ENCODE measurements at regions of chr9 and their contacts with region 1.

Region 1: GRCh38 chr9:97632985-97633858 is at the starts of genes NCBP1 and TSTD2:
- DNase-seq: peak; percentile 96 to 98 (median 96)
- H3K4me3 ChIP-seq: peak within 1 kb of the TSS; percentile 74 to 96 (median 93)
- H3K4me3 Mint-ChIP-seq: peak within 1 kb of the TSS; percentile 94 to 98
- H3K27ac ChIP-seq: peak within 1 kb of the TSS; percentile 98
- H3K27ac Mint-ChIP-seq: peak within 1 kb of the TSS; percentile 97 to 100 (median 100)
- H3K4me1 ChIP-seq: peaks cover 24 to 36% of the 10 kb centered on the region in 2 donors
- H3K4me1 Mint-ChIP-seq: peaks cover 48% of the 10 kb centered on the region
- H3K27me3 ChIP-seq: no peaks in the 10 kb centered on the region
- H3K27me3 Mint-ChIP-seq: no peaks in the 10 kb centered on the region
- CTCF ChIP-seq: no peak
- polyA plus RNA-seq, gene NCBP1: 8.9 to 15.8 (median 11.1) TPM
- polyA plus RNA-seq, gene TSTD2: 1.2 to 11.4 (median 2.4) TPM

Region 2: DNA sequence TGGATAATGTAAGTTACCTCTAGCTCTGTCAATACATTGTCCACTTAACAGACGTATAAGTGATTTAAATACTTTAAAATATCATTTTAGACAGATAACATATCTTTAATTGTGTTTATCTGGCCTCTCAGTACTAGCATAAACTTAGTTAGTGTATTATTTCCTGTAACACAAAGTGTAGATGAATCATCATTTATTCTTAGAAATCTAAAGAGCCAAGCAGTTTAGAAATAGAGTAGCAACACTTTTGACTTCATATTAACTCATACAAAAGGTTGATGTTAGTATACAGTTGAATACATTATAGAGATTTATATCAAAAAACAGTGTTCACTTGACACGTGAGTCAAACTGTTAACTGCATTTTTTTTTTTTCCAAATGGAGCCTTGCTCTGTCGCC is 18.4 kb after region 1 on chr9:
- intact Hi-C with region 1: no loop called
- DNase-seq: no peak
- H3K4me3 ChIP-seq: no peak overlapping the region
- H3K4me3 Mint-ChIP-seq: no peak overlapping the region
- H3K27ac ChIP-seq: no peak overlapping the region
- H3K27ac Mint-ChIP-seq: peak overlapping the region in 1 of 7 donors; percentile 53
- H3K4me1 ChIP-seq: no peaks in the 10 kb centered on the region
- H3K4me1 Mint-ChIP-seq: no peaks in the 10 kb centered on the region
- H3K27me3 ChIP-seq: no peaks in the 10 kb centered on the region
- H3K27me3 Mint-ChIP-seq: no peaks in the 10 kb centered on the region
- CTCF ChIP-seq: no peak

Region 3: DNA sequence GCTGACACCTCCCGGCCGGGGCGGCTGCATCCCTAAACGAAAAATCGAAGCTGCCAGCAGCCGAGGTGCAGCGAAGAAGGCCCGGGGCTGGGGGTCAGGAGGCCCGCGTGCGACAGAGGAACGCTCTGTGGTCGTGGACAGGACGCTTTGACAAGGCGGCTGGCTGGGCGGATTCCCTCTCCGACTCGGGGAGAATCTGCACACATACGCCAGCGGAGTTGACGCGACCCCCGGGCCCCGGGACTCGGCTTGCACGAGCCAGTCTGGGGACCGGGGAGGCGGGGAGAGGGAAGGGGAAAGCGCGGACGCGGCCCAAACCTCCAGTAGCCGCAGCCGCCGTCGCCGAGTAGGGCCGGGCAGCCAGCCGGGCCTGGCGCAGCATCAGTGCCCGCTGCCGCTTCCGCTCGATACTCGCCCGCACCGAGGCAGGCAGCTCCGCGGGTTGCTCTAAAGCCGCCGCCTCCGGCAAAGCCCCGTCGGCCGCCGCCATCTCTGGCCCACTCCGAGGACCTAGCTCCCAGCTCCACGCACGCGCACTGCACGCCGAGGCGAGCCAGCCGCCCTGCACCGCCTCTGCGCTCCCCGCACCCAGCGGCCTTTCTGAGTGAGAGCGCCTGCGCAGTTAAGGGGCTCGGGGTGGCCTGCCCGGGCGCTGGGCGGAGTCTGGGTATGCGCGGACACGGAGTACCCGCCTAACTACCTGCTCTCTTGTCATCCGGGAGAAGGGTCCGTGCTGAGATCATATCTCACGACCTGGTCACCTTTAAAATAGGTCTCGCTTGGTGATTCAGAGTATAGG is 63.8 kb after region 1 on chr9 and contains the start of gene XPA:
- intact Hi-C with region 1: loop called in 1 of 2 experiments (anchors 10 kb)
- DNase-seq: peak; percentile 92 to 94 (median 93)
- H3K4me3 ChIP-seq: peak within 1 kb of the TSS; percentile 76 to 87 (median 86)
- H3K4me3 Mint-ChIP-seq: peak within 1 kb of the TSS; percentile 90 to 95
- H3K27ac ChIP-seq: peak within 1 kb of the TSS; percentile 74 to 84
- H3K27ac Mint-ChIP-seq: peak within 1 kb of the TSS; percentile 85 to 92 (median 90)
- H3K4me1 ChIP-seq: peaks cover 31 to 38% of the 10 kb centered on the region in 2 donors
- H3K4me1 Mint-ChIP-seq: peaks cover 51% of the 10 kb centered on the region
- H3K27me3 ChIP-seq: peaks cover 0 to 5% of the 10 kb centered on the region in 2 donors
- H3K27me3 Mint-ChIP-seq: peaks cover 9 to 18% (median 14%) of the 10 kb centered on the region in 3 donors
- CTCF ChIP-seq: no peak
- polyA plus RNA-seq, gene XPA: 2.9 to 15.8 (median 15.4) TPM

Measured in CD14-positive monocyte (primary cell).